ENCODE measurements at regions of chr11 and their contacts with region 1.

Region 1: GRCh38 chr11:16613512-16614381 is 124.7 kb upstream of the C11orf58 start:
- DNase-seq: no peak
- H3K4me3 ChIP-seq: peak overlapping the region; percentile 39 to 57 (median 46)
- H3K27ac ChIP-seq: peak overlapping the region in 2 of 4 donors; percentile 15 to 33
- H3K4me1 ChIP-seq: peaks cover 5 to 30% (median 21%) of the 10 kb centered on the region in 4 donors
- H3K27me3 ChIP-seq: peaks cover 0 to 100% (median 58%) of the 10 kb centered on the region in 4 donors
- CTCF ChIP-seq: peak; percentile 77 to 91 (median 85)
- EP300 ChIP-seq: no peak
- POLR2A ChIP-seq: no peak

Region 2: GRCh38 chr11:15327786-15328231 is 1285.9 kb before region 1 on chr11:
- intact Hi-C with region 1: loop called (anchors 10 kb)
- DNase-seq: peak; percentile 89
- H3K4me3 ChIP-seq: no peak overlapping the region
- H3K27ac ChIP-seq: no peak overlapping the region
- H3K4me1 ChIP-seq: no peaks in the 10 kb centered on the region
- H3K27me3 ChIP-seq: no peaks in the 10 kb centered on the region
- CTCF ChIP-seq: peak in 2 of 3 experiments; percentile 44 to 51
- EP300 ChIP-seq: no peak
- POLR2A ChIP-seq: no peak

Region 3: DNA sequence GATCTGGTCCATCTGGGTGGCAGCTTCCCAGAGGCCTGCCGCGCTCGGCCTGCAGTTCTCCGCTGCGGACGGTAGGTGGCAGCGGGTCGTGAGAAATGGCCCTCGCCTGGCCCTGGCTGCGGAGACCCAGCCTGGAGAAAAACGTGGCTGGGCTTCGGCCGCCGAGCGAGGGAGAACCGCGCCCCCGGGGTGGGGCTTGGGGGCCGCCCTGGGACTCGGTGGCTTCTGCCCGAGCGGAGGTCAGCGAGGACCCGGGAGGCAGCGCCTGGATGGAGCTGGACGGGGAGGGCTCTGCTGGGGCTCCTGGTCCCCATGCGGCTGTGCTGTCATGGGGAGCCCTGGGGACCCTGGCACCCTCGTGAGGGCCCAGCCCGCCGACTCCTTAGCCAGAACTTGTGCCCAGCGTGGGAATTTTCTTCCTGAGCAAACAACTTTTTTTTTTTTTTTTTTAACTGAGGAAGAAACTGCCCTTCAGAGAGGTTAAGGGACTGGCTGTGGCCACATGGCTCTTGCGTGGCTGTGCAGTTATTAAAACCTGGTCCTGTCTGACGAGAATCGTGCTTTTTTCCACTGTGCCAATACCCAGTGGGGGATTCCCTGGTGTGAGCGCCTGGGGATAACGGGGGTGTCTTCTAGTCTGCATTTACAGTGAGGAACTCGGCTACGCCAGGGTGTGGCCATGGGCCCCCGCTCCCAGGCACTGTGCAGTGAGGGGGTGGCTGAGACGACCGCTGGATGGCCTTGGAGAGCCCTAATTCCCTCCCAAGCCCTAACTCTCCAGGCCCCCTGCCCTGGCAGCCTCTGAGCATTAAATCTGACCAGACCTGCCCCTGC is 963.4 kb before region 1 on chr11:
- intact Hi-C with region 1: loop called (anchors 5 kb)
- DNase-seq: peak; percentile 98
- H3K4me3 ChIP-seq: peak overlapping the region; percentile 51 to 62 (median 54)
- H3K27ac ChIP-seq: peak overlapping the region; percentile 61 to 73 (median 68)
- H3K4me1 ChIP-seq: peaks cover 8 to 16% (median 15%) of the 10 kb centered on the region in 4 donors
- H3K27me3 ChIP-seq: no peaks in the 10 kb centered on the region
- CTCF ChIP-seq: peak; percentile 96 to 99 (median 96)
- EP300 ChIP-seq: no peak
- POLR2A ChIP-seq: no peak

Region 4: GRCh38 chr11:15819679-15820286 is 794.0 kb before region 1 on chr11:
- intact Hi-C with region 1: loop called (anchors 5 kb)
- DNase-seq: peak; percentile 89
- H3K4me3 ChIP-seq: no peak overlapping the region
- H3K27ac ChIP-seq: no peak overlapping the region
- H3K4me1 ChIP-seq: peaks cover 41 to 52% (median 47%) of the 10 kb centered on the region in 4 donors
- H3K27me3 ChIP-seq: no peaks in the 10 kb centered on the region
- CTCF ChIP-seq: peak; percentile 73 to 90 (median 77)
- EP300 ChIP-seq: no peak
- POLR2A ChIP-seq: no peak

Measured in esophagus muscularis mucosa (tissue), 4 donors.